Activated CD4-positive, alpha-beta T cell treated with anti-CD3 and anti-CD28 coated beads for 36 hours (primary cell): ENCODE measurements at regions of chr9 and their contacts with region 1.

Region 1: GRCh38 chr9:76441551-76442322 is 17.2 kb upstream of the GCNT1 start:
- DNase-seq: peak; percentile 70
- ATAC-seq: peak; percentile 83
- H3K4me3 Mint-ChIP-seq: peak overlapping the region; percentile 80
- H3K27ac Mint-ChIP-seq: peak overlapping the region; percentile 96
- H3K4me1 Mint-ChIP-seq: peaks cover 51% of the 10 kb centered on the region
- H3K27me3 Mint-ChIP-seq: peaks cover 5% of the 10 kb centered on the region

Region 2: GRCh38 chr9:76082057-76082456 is 359.7 kb before region 1 on chr9:
- CTCF ChIA-PET with region 1: no interaction called
- POLR2A ChIA-PET with region 1: no interaction called
- intact Hi-C with region 1: no loop called
- DNase-seq: no peak
- ATAC-seq: no peak
- H3K4me3 Mint-ChIP-seq: no peak overlapping the region
- H3K27ac Mint-ChIP-seq: no peak overlapping the region
- H3K4me1 Mint-ChIP-seq: no peaks in the 10 kb centered on the region
- H3K27me3 Mint-ChIP-seq: no peaks in the 10 kb centered on the region

Region 3: DNA sequence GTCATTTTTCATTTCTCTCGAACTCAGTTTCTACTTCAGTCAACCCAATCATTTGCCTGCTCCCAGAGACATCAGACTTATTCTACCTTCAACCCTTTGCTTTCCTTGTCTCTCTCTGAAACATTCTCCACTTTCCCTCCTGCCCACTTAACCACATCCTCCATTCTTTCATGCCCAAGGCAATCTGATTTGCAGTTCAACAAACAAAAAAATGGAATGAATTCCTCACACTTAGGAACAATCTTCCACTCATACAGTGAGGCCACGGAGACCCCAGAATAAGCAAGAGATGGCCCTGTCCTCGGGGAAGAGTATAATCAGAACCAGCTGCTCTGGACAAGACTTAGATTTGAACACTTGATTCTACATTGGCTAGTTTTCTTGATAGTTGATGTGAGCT is 228.0 kb before region 1 on chr9:
- CTCF ChIA-PET with region 1: no interaction called
- POLR2A ChIA-PET with region 1: no interaction called
- intact Hi-C with region 1: no loop called
- DNase-seq: no peak
- ATAC-seq: no peak
- H3K4me3 Mint-ChIP-seq: no peak overlapping the region
- H3K27ac Mint-ChIP-seq: no peak overlapping the region
- H3K4me1 Mint-ChIP-seq: no peaks in the 10 kb centered on the region
- H3K27me3 Mint-ChIP-seq: peaks cover 2% of the 10 kb centered on the region

Region 4: GRCh38 chr9:76419782-76420380 is 21.9 kb before region 1 on chr9:
- CTCF ChIA-PET with region 1: interaction called, 12 read pairs
- POLR2A ChIA-PET with region 1: interaction called, 6 read pairs
- intact Hi-C with region 1: loop called (anchors 1 kb)
- DNase-seq: no peak
- ATAC-seq: no peak
- H3K4me3 Mint-ChIP-seq: no peak overlapping the region
- H3K27ac Mint-ChIP-seq: no peak overlapping the region
- H3K4me1 Mint-ChIP-seq: peaks cover 22% of the 10 kb centered on the region
- H3K27me3 Mint-ChIP-seq: peaks cover 2% of the 10 kb centered on the region

Region 5: DNA sequence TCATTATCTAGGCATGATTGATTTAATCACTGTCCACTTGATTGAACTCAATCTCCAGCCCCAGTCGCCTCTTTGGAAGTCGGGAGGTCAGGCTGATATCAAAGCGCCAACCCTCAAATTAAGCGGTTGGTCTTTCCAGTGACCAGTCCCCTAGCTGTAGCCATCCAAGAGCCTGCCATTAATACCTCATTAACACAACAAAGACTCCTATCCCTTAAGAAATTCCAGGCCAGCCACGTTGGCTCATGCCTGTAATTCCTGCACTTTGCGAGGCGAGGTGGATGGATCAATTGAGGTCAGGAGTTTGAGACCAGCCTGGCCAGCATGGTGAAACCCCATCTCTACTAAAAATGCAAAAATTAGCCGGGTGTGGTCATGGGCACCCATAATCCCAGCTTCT is 10.1 kb before region 1 on chr9:
- CTCF ChIA-PET with region 1: no interaction called
- POLR2A ChIA-PET with region 1: no interaction called
- intact Hi-C with region 1: no loop called
- DNase-seq: no peak
- ATAC-seq: no peak
- H3K4me3 Mint-ChIP-seq: no peak overlapping the region
- H3K27ac Mint-ChIP-seq: no peak overlapping the region
- H3K4me1 Mint-ChIP-seq: peaks cover 20% of the 10 kb centered on the region
- H3K27me3 Mint-ChIP-seq: peaks cover 7% of the 10 kb centered on the region

Region 6: DNA sequence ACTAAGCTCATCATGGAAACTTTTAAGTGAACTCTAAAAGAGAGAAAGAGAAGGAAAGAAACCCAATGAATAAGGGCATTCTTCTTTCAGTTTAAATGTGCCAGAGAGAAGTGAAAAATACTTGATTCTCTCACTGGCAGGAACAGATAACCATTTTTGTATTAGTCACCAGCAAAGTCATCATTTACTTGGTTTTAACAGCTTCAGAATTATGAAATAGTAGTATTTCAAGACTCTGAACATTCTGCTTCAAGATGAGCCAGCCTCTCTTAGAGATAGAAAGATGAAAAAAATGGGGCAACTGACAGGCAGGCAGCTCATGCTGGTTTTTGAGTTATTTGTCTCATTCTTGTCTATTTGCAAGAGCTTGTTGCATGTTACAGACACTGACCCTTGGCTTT is 120.8 kb after region 1 on chr9:
- CTCF ChIA-PET with region 1: interaction called, 4 read pairs
- POLR2A ChIA-PET with region 1: no interaction called
- intact Hi-C with region 1: loop called (anchors 5 kb)
- DNase-seq: no peak
- ATAC-seq: peak; percentile 91
- H3K4me3 Mint-ChIP-seq: no peak overlapping the region
- H3K27ac Mint-ChIP-seq: no peak overlapping the region
- H3K4me1 Mint-ChIP-seq: peaks cover 19% of the 10 kb centered on the region
- H3K27me3 Mint-ChIP-seq: peaks cover 15% of the 10 kb centered on the region

Region 7: GRCh38 chr9:76704593-76705204 is 263.0 kb after region 1 on chr9:
- CTCF ChIA-PET with region 1: interaction called, 10 read pairs
- POLR2A ChIA-PET with region 1: no interaction called
- intact Hi-C with region 1: no loop called
- DNase-seq: no peak
- ATAC-seq: no peak
- H3K4me3 Mint-ChIP-seq: no peak overlapping the region
- H3K27ac Mint-ChIP-seq: no peak overlapping the region
- H3K4me1 Mint-ChIP-seq: no peaks in the 10 kb centered on the region
- H3K27me3 Mint-ChIP-seq: peaks cover 24% of the 10 kb centered on the region

Region 8: GRCh38 chr9:77011973-77012821 is 570.5 kb after region 1 on chr9:
- CTCF ChIA-PET with region 1: no interaction called
- POLR2A ChIA-PET with region 1: no interaction called
- intact Hi-C with region 1: loop called in 1 of 2 experiments (anchors 10 kb)
- DNase-seq: peak; percentile 86
- ATAC-seq: peak; percentile 77
- H3K4me3 Mint-ChIP-seq: peak overlapping the region; percentile 46
- H3K27ac Mint-ChIP-seq: no peak overlapping the region
- H3K4me1 Mint-ChIP-seq: peaks cover 17% of the 10 kb centered on the region
- H3K27me3 Mint-ChIP-seq: peaks cover 64% of the 10 kb centered on the region